ENCODE measurements at regions of chr4 and their contacts with region 1.

Region 1: GRCh38 chr4:150010525-150011126 is 67.6 kb upstream of the DCLK2 start:
- DNase-seq: no peak

Region 2: DNA sequence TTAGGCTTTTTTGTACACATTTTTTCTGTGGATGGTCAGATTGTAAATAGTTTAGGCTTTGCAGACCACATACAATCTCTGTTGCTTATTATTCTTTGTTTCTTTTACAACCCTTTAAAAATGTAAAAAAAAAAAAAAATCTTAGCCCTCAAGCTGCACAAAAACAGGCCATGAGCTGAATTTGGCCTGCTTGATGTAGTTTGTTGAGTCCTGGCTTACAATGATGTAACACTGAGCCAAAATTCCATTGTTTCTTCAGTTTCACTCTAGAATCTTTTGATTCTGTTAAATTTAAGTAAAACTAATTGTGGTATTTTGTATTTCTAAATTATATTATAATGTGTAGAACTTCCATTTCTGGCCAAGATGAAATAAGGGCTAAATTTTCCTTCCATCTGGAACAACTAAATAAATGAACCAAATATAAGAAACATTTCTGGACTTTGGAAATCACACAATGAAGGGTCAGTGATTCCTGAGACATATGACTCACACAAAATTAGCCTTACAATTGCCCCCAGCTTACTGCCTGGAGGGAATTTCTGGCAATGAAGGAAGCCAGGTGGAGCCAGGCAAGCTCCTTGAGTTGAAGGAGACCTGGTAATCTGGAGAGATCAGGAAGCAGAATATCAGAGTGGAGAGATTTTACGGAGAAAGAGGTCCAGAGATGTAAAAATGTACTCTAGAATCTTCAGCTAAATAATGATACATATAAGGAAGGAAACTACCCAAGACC is 224.8 kb before region 1 on chr4:
- intact Hi-C with region 1: no loop called
- DNase-seq: no peak

Region 3: DNA sequence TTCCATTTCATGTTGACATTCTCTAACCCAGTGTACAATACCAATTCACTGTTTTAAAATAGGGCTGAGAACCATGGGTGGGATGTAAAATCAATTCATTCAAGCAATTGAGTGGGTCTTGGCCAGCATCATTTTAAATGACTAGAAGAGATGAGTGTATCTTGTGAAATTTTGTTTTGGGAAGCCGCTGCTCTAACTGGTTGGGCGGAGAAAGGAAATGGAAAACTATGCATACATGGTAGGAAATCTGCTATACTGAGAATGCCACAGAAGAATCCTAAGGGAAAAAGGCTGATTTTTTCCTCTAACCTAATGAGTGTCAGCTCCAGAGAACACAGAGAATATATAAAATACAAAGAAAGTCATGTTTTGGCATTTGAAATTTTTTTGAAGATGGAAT is 12.9 kb after region 1 on chr4:
- intact Hi-C with region 1: no loop called
- DNase-seq: no peak

Region 4: DNA sequence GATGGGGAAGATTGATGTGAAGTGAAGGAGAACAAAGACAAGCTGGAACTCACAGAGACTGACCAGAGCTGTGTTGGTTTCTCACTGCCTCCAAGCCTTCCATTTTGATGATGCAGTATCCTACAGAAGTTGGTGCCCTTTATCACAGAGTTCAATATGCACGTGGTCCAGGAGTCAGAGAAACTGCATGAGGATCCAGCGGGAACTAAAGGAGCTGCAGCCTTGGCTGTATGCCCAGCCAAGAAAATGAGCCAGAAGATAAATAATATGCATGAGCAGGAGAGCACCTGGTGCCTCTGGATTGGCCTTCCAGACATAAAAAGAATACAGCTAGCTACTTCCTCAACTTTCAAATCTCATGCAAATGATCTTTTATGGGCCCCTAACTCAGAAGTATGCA is 23.3 kb after region 1 on chr4:
- intact Hi-C with region 1: loop called in 1 of 2 experiments (anchors 1 kb)
- DNase-seq: no peak

Region 5: GRCh38 chr4:150217192-150217591 is 206.6 kb after region 1 on chr4:
- intact Hi-C with region 1: no loop called
- DNase-seq: no peak

Region 6: GRCh38 chr4:150402871-150403272 is 392.2 kb after region 1 on chr4:
- intact Hi-C with region 1: no loop called
- DNase-seq: no peak

Measured in posterior vena cava (tissue), 2 donors.